ENCODE measurements at regions of chr7 and their contacts with region 1.

Region 1: DNA sequence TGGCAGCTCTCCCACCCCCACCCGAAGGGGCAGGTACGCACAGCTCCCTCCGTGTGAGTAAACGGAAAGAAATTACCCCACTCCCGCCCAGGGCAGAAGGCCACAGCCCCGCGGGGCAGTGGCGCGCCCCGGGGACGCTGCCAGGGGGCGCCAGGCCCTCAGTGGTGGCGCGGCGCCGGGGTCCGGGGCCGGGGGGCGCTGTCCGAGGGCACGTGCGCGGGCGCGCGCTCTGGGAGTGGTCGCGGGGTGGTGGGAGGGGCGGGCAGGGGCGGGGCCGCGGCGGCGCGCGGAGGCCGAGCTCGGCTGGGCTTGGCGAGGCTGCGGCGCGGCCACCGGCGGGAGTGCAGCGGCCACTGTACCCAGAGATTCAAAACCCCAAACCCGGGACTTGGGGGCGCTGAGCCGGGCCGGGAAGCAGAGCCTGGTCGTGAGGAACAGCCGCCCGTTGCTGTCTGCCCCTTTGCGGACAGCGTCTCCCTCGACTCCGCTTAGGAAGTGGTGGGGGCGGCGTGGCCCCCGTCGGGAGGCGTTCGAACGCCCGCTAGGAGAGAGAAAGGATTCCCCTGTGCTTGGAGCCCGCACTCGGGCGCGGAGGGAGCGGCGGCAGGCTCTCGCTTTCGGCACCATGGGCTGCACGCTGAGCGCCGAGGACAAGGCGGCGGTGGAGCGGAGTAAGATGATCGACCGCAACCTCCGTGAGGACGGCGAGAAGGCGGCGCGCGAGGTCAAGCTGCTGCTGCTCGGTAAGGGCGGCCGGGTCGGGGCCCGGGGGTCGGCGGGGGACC is at the start of gene GNAI1:
- DNase-seq: peak; percentile 81 to 92 (median 89)
- ATAC-seq: peak; percentile 79 to 91 (median 84)
- H3K4me3 ChIP-seq: peak within 1 kb of the TSS; percentile 85 to 89 (median 87)
- H3K27ac ChIP-seq: peak within 1 kb of the TSS; percentile 85 to 94 (median 92)
- H3K4me1 ChIP-seq: peaks cover 0 to 19% (median 9%) of the 10 kb centered on the region in 4 donors
- H3K27me3 ChIP-seq: no peaks in the 10 kb centered on the region
- CTCF ChIP-seq: peak; percentile 27 to 71 (median 50)
- POLR2A ChIP-seq: peak; percentile 77
- total RNA-seq, gene GNAI1: 10.9 to 21.5 (median 16.5) TPM

Region 2: DNA sequence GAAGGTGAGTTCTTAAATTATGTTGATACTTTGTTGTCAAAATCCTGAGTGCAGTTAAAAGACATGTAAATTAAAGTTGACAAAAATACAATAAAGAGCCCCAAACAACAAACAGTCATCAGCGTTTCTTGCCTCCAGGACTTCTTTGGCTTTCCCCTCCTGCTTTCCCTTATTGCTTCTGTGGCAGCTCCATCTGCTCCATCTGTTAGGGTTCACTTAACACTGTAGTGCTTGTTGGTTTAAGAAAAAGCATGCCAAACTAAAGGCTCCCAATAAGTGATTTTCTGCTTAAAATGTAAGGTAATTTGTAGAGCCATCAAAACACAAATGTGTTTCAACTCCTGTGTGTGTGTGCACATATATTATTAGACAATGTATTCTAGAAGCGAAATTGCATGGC is 254.4 kb before region 1 on chr7:
- intact Hi-C with region 1: no loop called
- DNase-seq: no peak
- ATAC-seq: no peak
- H3K4me3 ChIP-seq: no peak overlapping the region
- H3K27ac ChIP-seq: no peak overlapping the region
- H3K4me1 ChIP-seq: no peaks in the 10 kb centered on the region
- H3K27me3 ChIP-seq: no peaks in the 10 kb centered on the region
- CTCF ChIP-seq: no peak
- POLR2A ChIP-seq: no peak

Region 3: GRCh38 chr7:79988653-79989052 is 146.1 kb before region 1 on chr7:
- intact Hi-C with region 1: no loop called
- DNase-seq: no peak
- ATAC-seq: no peak
- H3K4me3 ChIP-seq: no peak overlapping the region
- H3K27ac ChIP-seq: no peak overlapping the region
- H3K4me1 ChIP-seq: no peaks in the 10 kb centered on the region
- H3K27me3 ChIP-seq: no peaks in the 10 kb centered on the region
- CTCF ChIP-seq: no peak
- POLR2A ChIP-seq: no peak

Region 4: DNA sequence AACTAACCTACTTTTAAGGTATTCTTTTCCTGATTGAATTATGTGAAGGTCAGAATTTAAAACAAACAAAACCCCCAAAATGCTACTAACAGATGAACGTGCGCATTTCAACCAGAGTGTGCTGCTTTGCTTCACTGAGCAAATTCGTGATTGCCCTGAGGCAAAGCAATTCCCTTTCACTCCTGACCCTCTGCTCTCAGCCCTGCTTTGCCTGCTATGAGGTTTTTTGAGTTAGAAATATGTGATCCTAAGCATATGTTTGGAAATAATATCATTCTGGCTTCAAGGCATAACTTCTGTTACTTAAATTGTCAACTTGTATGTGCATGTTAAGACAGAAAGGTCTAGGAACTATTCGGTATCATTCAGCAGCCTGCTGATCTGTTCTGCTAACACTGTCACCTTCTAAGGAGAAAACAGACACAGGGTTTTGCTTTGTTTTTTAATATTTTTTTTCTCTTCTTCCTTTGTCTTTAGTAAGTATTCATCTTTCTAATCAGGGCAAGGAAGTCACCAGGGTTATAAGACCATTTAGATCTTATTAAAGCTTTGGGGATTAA is 253.0 kb after region 1 on chr7:
- intact Hi-C with region 1: loop called in 1 of 2 experiments (anchors 10 kb)
- DNase-seq: no peak
- ATAC-seq: peak; percentile 28 to 68 (median 58)
- H3K4me3 ChIP-seq: peak overlapping the region in 1 of 3 donors; percentile 6
- H3K27ac ChIP-seq: peak overlapping the region in 2 of 3 donors; percentile 27 to 35
- H3K4me1 ChIP-seq: peaks cover 0 to 20% (median 11%) of the 10 kb centered on the region in 4 donors
- H3K27me3 ChIP-seq: no peaks in the 10 kb centered on the region
- CTCF ChIP-seq: no peak
- POLR2A ChIP-seq: no peak

Measured in right lobe of liver (tissue), 6 donors.